Prostate gland (tissue), 2 donors: ENCODE measurements at regions of chr11 and their contacts with region 1.

Region 1: DNA sequence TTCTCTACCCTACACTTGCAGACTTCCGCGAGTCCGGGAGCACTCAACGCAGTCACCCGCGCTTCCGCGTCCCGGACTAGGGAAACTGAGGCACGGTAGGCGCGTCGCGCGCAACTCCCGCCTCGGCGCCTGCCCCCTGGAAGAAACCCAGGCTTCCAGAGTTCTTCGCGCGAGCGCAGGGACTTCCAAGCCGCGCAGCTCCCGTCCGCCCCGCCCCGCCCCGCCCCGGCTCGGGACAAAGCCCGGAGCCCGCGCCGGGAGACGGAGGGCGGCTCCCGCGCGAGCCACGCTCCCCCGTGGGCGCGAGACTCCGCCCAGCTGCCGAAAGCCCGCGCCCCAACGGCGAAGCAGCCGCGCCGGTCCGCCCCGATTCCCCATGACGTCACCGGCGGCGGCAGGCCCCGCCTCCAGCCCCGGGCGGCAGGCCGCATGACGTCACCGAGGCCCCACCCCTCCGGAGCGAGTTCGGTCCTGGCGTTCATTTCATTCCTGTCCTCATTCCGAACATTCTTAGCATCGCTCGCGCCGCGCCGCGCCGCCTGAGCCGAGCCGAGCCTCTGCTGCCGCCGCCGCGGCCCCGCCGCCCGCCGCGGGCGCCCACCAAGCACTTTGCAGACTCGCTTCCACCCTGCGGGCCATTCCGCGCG is at the start of gene TEAD1:
- DNase-seq: peak; percentile 97
- H3K4me3 ChIP-seq: peak within 1 kb of the TSS; percentile 83 to 90
- H3K27ac ChIP-seq: peak within 1 kb of the TSS; percentile 97 to 98
- H3K4me1 ChIP-seq: no peaks in the 10 kb centered on the region
- H3K27me3 ChIP-seq: no peaks in the 10 kb centered on the region
- CTCF ChIP-seq: peak in 2 of 4 experiments; percentile 11 to 27
- POLR2A ChIP-seq: peak; percentile 69
- total RNA-seq, gene TEAD1: 47.9 to 87.0 TPM

Region 2: GRCh38 chr11:12331239-12331874 is 342.7 kb before region 1 on chr11:
- intact Hi-C with region 1: loop called (anchors 5 kb)
- DNase-seq: peak; percentile 83
- H3K4me3 ChIP-seq: no peak overlapping the region
- H3K27ac ChIP-seq: no peak overlapping the region
- H3K4me1 ChIP-seq: no peaks in the 10 kb centered on the region
- H3K27me3 ChIP-seq: no peaks in the 10 kb centered on the region
- CTCF ChIP-seq: peak; percentile 41 to 90 (median 82)
- POLR2A ChIP-seq: no peak

Region 3: DNA sequence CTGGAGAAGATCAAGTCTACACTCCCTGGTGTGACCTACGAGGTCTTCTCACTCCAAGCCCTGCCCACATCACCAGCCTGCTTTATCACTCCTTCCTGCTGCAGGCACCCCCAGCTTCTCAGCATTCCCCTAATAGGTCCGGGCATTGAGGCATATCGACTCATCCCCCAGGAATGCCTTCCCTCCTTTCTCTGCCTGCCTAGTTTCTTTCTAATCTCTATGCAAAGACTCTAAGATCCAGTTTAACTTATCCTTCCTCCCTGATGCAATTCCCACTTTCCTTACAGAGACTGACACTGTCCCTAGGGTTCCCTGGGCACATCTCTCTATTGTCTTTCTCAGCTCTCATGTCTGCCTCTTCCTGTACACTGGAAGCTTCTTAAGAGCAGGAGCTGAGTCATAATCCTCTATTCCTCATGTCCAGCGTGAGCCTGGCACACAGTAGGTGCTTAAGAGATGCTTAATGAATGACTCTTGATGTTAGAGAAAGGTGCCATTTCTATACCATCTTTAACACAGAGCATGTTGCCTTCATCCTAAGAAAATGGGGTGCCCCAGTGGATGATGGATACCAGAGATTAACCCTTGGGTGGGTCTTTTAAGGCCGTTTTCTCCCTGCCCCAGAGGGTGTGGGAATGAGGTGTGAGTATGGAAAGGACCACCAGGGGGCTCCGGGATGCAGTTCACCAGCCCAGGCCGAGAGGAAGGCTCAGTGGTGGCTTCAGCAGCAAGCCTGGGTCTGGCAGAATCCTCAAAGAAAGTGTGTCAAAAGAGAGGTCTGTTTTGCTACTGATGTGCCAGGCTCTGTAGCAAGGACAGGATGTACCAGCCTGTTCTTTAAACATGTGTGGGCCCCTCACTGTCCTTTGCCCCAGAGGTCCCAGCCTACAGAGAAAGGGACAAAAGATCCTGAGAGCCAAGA is 262.0 kb before region 1 on chr11:
- intact Hi-C with region 1: loop called (anchors 5 kb)
- DNase-seq: no peak
- H3K4me3 ChIP-seq: no peak overlapping the region
- H3K27ac ChIP-seq: peak overlapping the region; percentile 42 to 64
- H3K4me1 ChIP-seq: no peaks in the 10 kb centered on the region
- H3K27me3 ChIP-seq: no peaks in the 10 kb centered on the region
- CTCF ChIP-seq: peak; percentile 34 to 70 (median 66)
- POLR2A ChIP-seq: no peak

Region 4: GRCh38 chr11:12813371-12814225 is 139.6 kb after region 1 on chr11:
- intact Hi-C with region 1: loop called (anchors 5 kb)
- DNase-seq: no peak
- H3K4me3 ChIP-seq: no peak overlapping the region
- H3K27ac ChIP-seq: peak overlapping the region; percentile 59 to 63
- H3K4me1 ChIP-seq: peaks cover 2% of the 10 kb centered on the region
- H3K27me3 ChIP-seq: no peaks in the 10 kb centered on the region
- CTCF ChIP-seq: peak in 1 of 4 experiments; percentile 40
- POLR2A ChIP-seq: no peak